PC-9 (cell line): ENCODE measurements at regions of chr10 and their contacts with region 1.

Region 1: GRCh38 chr10:74176380-74177139 is 25.5 kb downstream of the ADK start:
- DNase-seq: peak; percentile 91 to 97
- H3K4me3 ChIP-seq: peak overlapping the region; percentile 90
- H3K27ac ChIP-seq: peak overlapping the region; percentile 79
- H3K4me1 ChIP-seq: peaks cover 33% of the 10 kb centered on the region
- H3K27me3 ChIP-seq: no peaks in the 10 kb centered on the region
- CTCF ChIP-seq: no peak

Region 2: GRCh38 chr10:74189999-74190421 is 13.4 kb after region 1 on chr10:
- CTCF ChIA-PET with region 1: no interaction called
- POLR2A ChIA-PET with region 1: interaction called, 3 read pairs
- intact Hi-C with region 1: loop called (anchors 1 kb)
- DNase-seq: peak; percentile 70 to 98
- H3K4me3 ChIP-seq: peak overlapping the region; percentile 50; the same call in 1 of the 2 replicates
- H3K27ac ChIP-seq: peak overlapping the region; percentile 96
- H3K4me1 ChIP-seq: peaks cover 74% of the 10 kb centered on the region
- H3K27me3 ChIP-seq: no peaks in the 10 kb centered on the region
- CTCF ChIP-seq: no peak

Region 3: DNA sequence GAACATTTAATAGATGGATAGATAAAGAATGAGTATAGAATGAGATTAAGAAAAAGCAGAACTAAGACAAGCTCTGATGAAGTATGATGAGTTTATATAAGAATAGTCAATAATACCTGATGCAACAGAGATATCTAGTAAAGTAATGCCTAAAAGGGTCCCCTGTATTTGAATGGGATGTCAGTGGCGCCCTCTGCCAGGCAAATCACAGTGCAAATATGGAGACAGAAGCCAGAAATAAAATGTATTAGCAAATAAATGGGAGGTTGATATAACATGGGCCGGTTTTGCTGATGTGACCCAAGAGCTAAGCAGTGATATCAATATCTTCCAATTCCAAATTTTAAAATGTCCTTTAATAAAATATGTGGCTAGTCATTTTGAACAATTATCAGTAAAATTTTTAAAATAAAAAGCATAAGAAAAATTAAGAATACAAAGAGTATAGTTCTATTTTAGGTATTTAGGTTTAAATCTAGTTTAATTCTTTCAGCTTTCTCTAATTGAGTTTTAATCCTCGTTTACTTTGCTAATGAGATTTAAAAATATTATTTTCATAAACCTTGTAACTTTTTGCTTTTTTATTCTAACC is 37.1 kb after region 1 on chr10:
- CTCF ChIA-PET with region 1: interaction called, 6 read pairs
- POLR2A ChIA-PET with region 1: no interaction called
- intact Hi-C with region 1: loop called (anchors 5 kb)
- DNase-seq: peak; percentile 50 to 52
- H3K4me3 ChIP-seq: no peak overlapping the region
- H3K27ac ChIP-seq: peak overlapping the region; percentile 64
- H3K4me1 ChIP-seq: 0 out of 2 replicates have a peak, but pooled peaks cover 12% of the 10 kb centered on the region
- H3K27me3 ChIP-seq: no peaks in the 10 kb centered on the region
- CTCF ChIP-seq: peak; percentile 74

Region 4: GRCh38 chr10:74223755-74224531 is 47.4 kb after region 1 on chr10:
- CTCF ChIA-PET with region 1: interaction called, 4 read pairs
- POLR2A ChIA-PET with region 1: no interaction called
- intact Hi-C with region 1: loop called (anchors 1 kb)
- DNase-seq: peak; percentile 45 to 92
- H3K4me3 ChIP-seq: peak overlapping the region; percentile 6; the same call in 1 of the 2 replicates
- H3K27ac ChIP-seq: peak overlapping the region; percentile 96
- H3K4me1 ChIP-seq: peaks cover 51% of the 10 kb centered on the region
- H3K27me3 ChIP-seq: no peaks in the 10 kb centered on the region
- CTCF ChIP-seq: no peak